ENCODE measurements at regions of chr6 and their contacts with region 1.

Region 1: GRCh38 chr6:162177746-162178145 is 549.8 kb downstream of the PRKN start:
- DNase-seq: peak in 4 of 5 donors; percentile 36 to 43 (median 38)
- ATAC-seq: peak; percentile 76 to 92 (median 84)
- H3K4me3 ChIP-seq: no peak overlapping the region
- H3K27ac ChIP-seq: peak overlapping the region in 10 of 12 donors; percentile 11 to 78 (median 66)
- H3K4me1 ChIP-seq: peaks cover 0 to 20% (median 9%) of the 10 kb centered on the region in 12 donors
- H3K27me3 ChIP-seq: no peaks in the 10 kb centered on the region
- CTCF ChIP-seq: peak in 11 of 12 donors; percentile 15 to 63 (median 53)
- POLR2A ChIP-seq: no peak

Region 2: GRCh38 chr6:161740486-161740885 is 437.3 kb before region 1 on chr6:
- intact Hi-C with region 1: no loop called
- DNase-seq: no peak
- ATAC-seq: no peak
- H3K4me3 ChIP-seq: no peak overlapping the region
- H3K27ac ChIP-seq: no peak overlapping the region
- H3K4me1 ChIP-seq: no peaks in the 10 kb centered on the region
- H3K27me3 ChIP-seq: no peaks in the 10 kb centered on the region
- CTCF ChIP-seq: no peak
- POLR2A ChIP-seq: no peak

Region 3: DNA sequence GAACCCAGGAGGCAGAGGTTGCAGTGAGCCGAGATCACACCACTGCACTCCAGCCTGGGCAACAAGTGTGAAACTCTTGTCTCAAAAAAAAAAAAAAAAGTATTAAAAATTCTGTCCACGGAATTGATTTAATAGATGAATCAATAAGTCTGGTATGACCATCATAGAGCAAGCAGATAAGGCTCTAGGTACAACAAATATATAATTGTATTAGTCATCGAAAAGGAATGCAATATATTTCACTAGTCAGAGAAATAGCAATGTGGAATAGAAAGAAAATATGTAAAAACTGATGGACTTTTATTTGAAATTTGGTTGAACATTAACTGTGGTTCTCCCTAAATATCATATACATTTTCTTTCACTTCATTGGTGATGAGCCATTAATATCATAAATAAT is 427.1 kb before region 1 on chr6:
- intact Hi-C with region 1: loop called in 1 of 10 experiments (anchors 10 kb)
- DNase-seq: no peak
- ATAC-seq: no peak
- H3K4me3 ChIP-seq: no peak overlapping the region
- H3K27ac ChIP-seq: no peak overlapping the region
- H3K4me1 ChIP-seq: no peaks in the 10 kb centered on the region
- H3K27me3 ChIP-seq: no peaks in the 10 kb centered on the region
- CTCF ChIP-seq: no peak
- POLR2A ChIP-seq: no peak

Region 4: DNA sequence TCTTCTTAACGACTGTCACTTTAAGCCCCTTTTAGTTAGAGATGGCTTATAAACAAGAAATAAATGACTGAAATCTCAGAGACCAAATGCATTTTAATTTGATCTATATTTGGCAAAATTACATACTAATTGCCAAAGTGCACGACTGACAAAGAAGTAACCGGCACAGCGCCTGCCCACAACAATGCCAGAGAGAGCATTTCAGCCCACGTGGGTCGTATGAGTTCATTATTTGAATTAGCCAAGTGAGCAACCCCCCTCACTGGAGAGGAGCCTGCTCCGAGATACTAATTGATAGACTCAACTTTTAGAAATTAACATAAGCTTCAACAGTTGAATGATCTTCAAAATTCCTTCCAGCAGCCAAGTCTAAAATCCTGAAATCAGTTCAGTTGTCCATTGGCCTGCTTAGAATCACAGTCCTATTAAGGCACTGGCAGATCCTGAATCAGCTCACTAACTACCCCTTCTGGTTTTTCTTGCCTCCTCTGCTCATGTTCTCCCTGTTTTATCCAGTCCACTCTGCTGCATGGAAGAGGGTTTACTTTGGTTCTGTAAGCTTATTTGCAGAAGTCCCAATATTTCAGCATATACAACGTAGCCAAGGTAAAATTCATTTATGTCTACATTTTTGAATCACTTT is 384.8 kb before region 1 on chr6:
- intact Hi-C with region 1: no loop called
- DNase-seq: no peak
- ATAC-seq: no peak
- H3K4me3 ChIP-seq: no peak overlapping the region
- H3K27ac ChIP-seq: no peak overlapping the region
- H3K4me1 ChIP-seq: no peaks in the 10 kb centered on the region
- H3K27me3 ChIP-seq: no peaks in the 10 kb centered on the region
- CTCF ChIP-seq: no peak
- POLR2A ChIP-seq: no peak

Region 5: GRCh38 chr6:162090734-162091133 is 87.0 kb before region 1 on chr6:
- intact Hi-C with region 1: no loop called
- DNase-seq: no peak
- ATAC-seq: no peak
- H3K4me3 ChIP-seq: no peak overlapping the region
- H3K27ac ChIP-seq: no peak overlapping the region
- H3K4me1 ChIP-seq: peaks cover 0 to 18% (median 0%) of the 10 kb centered on the region in 12 donors
- H3K27me3 ChIP-seq: no peaks in the 10 kb centered on the region
- CTCF ChIP-seq: no peak
- POLR2A ChIP-seq: no peak

Region 6: DNA sequence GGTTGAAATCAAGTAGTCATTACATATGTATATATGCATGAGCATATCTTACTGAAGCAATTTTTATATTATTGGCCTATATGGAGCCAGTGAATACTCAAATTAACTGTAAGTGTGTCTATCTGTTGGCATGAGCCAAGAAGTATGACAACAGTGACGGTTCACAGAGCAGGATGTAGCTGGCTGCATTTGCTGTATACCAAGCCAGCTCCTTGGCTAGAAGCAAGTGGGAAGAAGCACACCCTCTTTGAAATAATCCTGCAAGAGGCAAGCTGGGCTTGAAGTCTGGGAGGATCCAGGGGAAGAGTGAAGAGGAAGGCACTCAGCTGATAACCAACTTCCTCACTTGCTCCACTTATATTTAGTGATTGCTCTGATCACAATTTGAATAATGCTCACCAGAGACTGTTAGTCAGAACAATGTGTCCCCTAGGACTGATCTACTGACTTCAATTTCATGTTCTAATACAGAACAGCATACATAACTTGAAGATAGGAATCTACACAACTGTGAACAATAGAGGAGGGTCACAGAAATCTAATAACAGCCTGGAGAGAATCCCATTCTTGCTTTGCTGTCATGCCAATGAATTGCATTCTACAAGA is 52.5 kb after region 1 on chr6:
- intact Hi-C with region 1: loop called in 1 of 10 experiments (anchors 5 kb)
- DNase-seq: peak in 1 of 5 donors; percentile 12
- ATAC-seq: peak; percentile 62 to 85 (median 77)
- H3K4me3 ChIP-seq: no peak overlapping the region
- H3K27ac ChIP-seq: peak overlapping the region in 8 of 12 donors; percentile 8 to 49 (median 29)
- H3K4me1 ChIP-seq: peaks cover 0 to 45% (median 16%) of the 10 kb centered on the region in 12 donors
- H3K27me3 ChIP-seq: no peaks in the 10 kb centered on the region
- CTCF ChIP-seq: no peak
- POLR2A ChIP-seq: no peak

Region 7: DNA sequence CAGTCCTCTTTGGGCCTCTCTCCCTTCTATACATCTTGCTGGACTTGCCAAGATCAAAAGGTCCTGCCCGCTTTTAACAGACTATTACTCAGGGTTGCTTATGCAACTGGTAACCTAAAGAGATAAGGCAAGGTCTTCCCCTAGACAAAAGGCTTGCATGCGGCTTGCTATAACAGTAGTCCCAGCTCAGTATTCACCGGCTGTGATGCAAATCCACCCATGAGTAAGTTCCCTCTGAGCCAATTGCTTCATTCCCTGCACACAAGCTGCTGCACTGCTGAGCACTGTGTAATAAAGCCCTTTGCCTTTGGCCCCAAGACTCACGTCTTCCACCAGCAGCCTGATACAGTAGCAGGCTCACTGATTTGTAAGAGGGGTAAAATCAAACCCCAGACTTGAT is 186.0 kb after region 1 on chr6:
- intact Hi-C with region 1: loop called in 1 of 10 experiments (anchors 10 kb)
- DNase-seq: no peak
- ATAC-seq: no peak
- H3K4me3 ChIP-seq: no peak overlapping the region
- H3K27ac ChIP-seq: no peak overlapping the region
- H3K4me1 ChIP-seq: peaks cover 0 to 12% (median 2%) of the 10 kb centered on the region in 12 donors
- H3K27me3 ChIP-seq: no peaks in the 10 kb centered on the region
- CTCF ChIP-seq: no peak
- POLR2A ChIP-seq: no peak

Region 8: DNA sequence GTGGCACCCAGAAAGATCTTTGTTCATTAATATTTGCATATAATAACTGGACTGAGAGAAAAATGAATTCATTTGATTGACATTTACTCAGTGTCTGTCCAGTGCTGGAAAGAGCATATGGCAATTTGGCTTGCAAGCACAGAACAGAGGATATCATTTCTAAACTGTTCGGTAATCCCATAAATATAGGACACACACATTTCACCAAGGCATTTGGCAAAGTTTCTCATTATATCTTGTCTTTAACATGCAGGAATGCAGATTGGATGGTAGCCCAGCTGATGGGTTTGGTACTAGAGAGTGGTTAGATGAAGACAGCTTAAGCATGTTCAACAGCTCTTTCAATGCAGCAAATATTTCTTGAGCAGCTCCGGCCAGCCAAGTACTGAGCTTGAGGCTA is 290.6 kb after region 1 on chr6:
- intact Hi-C with region 1: loop called in 1 of 10 experiments (anchors 10 kb)
- DNase-seq: peak in 4 of 5 donors; percentile 57 to 72 (median 64)
- ATAC-seq: peak; percentile 83 to 94 (median 90)
- H3K4me3 ChIP-seq: no peak overlapping the region
- H3K27ac ChIP-seq: peak overlapping the region in 11 of 12 donors; percentile 47 to 89 (median 82)
- H3K4me1 ChIP-seq: peaks cover 0 to 13% (median 0%) of the 10 kb centered on the region in 12 donors
- H3K27me3 ChIP-seq: no peaks in the 10 kb centered on the region
- CTCF ChIP-seq: no peak
- POLR2A ChIP-seq: no peak

Region 9: GRCh38 chr6:162736961-162737360 is 559.2 kb after region 1 on chr6:
- intact Hi-C with region 1: loop called in 2 of 10 experiments (anchors 5 to 10 kb)
- DNase-seq: no peak
- ATAC-seq: peak in 3 of 4 donors; percentile 51 to 70 (median 53)
- H3K4me3 ChIP-seq: no peak overlapping the region
- H3K27ac ChIP-seq: no peak overlapping the region
- H3K4me1 ChIP-seq: peaks cover 0 to 6% (median 0%) of the 10 kb centered on the region in 12 donors
- H3K27me3 ChIP-seq: no peaks in the 10 kb centered on the region
- CTCF ChIP-seq: peak in 11 of 12 donors; percentile 7 to 62 (median 49)
- POLR2A ChIP-seq: no peak